WTC11 (cell line): ENCODE measurements at regions of chr14 and their contacts with region 1.

Region 1: GRCh38 chr14:97179573-97179972 is 382.4 kb downstream of the VRK1 start:
- DNase-seq: no peak
- ATAC-seq: no peak
- H3K4me3 Mint-ChIP-seq: no peak overlapping the region
- H3K27ac Mint-ChIP-seq: no peak overlapping the region
- H3K4me1 Mint-ChIP-seq: no peaks in the 10 kb centered on the region
- H3K27me3 Mint-ChIP-seq: peaks cover 2% of the 10 kb centered on the region; the same call in 1 of the 2 replicates
- CTCF ChIP-seq: no peak

Region 2: GRCh38 chr14:96938946-96939345 is 240.6 kb before region 1 on chr14:
- CTCF ChIA-PET with region 1: no interaction called
- POLR2A ChIA-PET with region 1: interaction called, 11 read pairs
- DNase-seq: peak; percentile 67
- ATAC-seq: peak; percentile 55
- H3K4me3 Mint-ChIP-seq: no peak overlapping the region
- H3K27ac Mint-ChIP-seq: no peak overlapping the region
- H3K4me1 Mint-ChIP-seq: no peaks in the 10 kb centered on the region
- H3K27me3 Mint-ChIP-seq: no peaks in the 10 kb centered on the region
- CTCF ChIP-seq: peak; percentile 79